PC-3 (cell line): ENCODE measurements at regions of chr3 and their contacts with region 1.

Region 1: DNA sequence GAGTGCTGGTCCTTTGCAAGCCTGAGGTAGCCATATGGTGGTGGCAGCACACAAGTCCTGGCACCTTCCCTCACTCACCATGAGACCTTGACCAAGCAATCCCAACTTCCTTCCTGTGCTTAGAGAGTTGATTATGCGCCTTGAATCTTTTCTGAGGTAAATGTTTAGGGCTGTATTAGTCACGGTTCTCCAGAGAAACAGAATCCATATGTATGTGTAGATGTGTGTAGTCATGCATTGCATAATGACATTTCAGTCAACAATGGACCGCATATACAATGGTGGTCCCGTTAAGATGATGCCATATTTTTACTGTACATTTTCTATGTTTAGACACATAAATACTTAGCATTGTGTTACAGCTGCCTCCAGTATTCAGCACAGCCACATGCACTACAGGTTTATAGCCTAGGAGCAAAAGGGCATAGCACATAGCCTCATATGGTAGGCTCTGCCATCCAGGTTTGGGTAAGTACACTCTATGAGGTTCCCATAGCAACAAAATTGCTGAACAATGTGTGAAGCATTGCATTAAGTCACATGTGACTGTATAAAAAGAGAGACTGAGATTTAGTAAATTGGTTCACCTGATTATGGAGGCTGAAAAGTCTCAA is 20.2 kb upstream of the NUP210 start:
- DNase-seq: no peak
- ATAC-seq: no peak
- H3K4me3 ChIP-seq: no peak overlapping the region
- H3K27ac ChIP-seq: no peak overlapping the region
- H3K4me1 ChIP-seq: no peaks in the 10 kb centered on the region
- H3K27me3 ChIP-seq: no peaks in the 10 kb centered on the region
- CTCF ChIP-seq: no peak

Region 2: DNA sequence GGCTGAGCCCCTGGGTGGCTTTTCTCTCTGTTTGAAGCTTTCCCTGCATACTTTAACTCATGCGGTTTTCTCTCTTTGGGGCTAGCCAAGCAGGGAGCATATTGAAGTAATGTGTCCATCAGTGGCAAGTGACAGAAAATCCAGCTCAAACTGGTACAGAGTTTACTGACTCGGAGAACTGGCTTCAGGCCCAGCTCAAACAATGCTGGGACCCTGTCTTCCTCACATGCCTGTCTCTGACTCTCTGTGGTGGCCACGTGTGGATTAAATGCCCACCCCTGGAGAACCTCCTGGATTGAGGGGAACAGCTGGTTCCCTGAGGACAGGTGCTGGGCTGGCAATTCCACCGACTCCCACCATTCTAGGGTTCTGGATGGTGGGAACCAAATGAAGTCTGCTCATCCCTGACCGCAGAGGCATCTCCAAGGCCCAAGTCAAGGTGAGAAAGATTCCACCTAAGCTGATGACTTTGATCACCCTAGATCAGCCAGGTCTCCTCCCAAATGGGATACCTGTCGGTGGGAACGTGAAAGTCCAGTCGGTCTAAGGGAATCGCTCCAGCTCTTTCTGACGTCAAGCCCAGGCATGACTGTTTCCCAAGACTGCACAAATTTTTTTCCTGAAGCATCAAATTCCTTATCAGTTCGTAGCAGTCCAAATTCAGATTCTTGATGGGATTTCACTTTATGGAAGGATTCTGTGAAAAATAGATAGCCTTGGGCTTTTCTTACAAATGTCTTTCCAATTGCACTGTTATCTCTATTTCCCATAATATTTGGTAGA is 23.5 kb after region 1 on chr3:
- CTCF ChIA-PET with region 1: no interaction called
- POLR2A ChIA-PET with region 1: no interaction called
- intact Hi-C with region 1: loop called (anchors 1 kb)
- DNase-seq: no peak
- ATAC-seq: no peak
- H3K4me3 ChIP-seq: no peak overlapping the region
- H3K27ac ChIP-seq: no peak overlapping the region
- H3K4me1 ChIP-seq: no peaks in the 10 kb centered on the region
- H3K27me3 ChIP-seq: no peaks in the 10 kb centered on the region
- CTCF ChIP-seq: no peak